Mammary epithelial cell (primary cell): ENCODE measurements at regions of chr7 and their contacts with region 1.

Region 1: GRCh38 chr7:23055582-23056178 is 41.8 kb upstream of the HYCC1 start:
- DNase-seq: peak; percentile 57
- H3K4me3 ChIP-seq: no peak overlapping the region
- H3K27ac ChIP-seq: no peak overlapping the region
- H3K4me1 ChIP-seq: peaks cover 2% of the 10 kb centered on the region
- H3K27me3 ChIP-seq: no peaks in the 10 kb centered on the region
- CTCF ChIP-seq: peak; percentile 94 to 95

Region 2: GRCh38 chr7:22854158-22855048 is 201.3 kb before region 1 on chr7:
- CTCF ChIA-PET with region 1: no interaction called
- dilution Hi-C with region 1: no loop called
- in situ Hi-C with region 1: loop called in 1 of 2 experiments (anchors 10 kb)
- intact Hi-C with region 1: loop called (anchors 1 kb)
- DNase-seq: peak; percentile 73
- H3K4me3 ChIP-seq: peak overlapping the region; percentile 64 to 77 (median 75)
- H3K27ac ChIP-seq: peak overlapping the region; percentile 99
- H3K4me1 ChIP-seq: peaks cover 39% of the 10 kb centered on the region
- H3K27me3 ChIP-seq: no peaks in the 10 kb centered on the region
- CTCF ChIP-seq: no peak

Region 3: DNA sequence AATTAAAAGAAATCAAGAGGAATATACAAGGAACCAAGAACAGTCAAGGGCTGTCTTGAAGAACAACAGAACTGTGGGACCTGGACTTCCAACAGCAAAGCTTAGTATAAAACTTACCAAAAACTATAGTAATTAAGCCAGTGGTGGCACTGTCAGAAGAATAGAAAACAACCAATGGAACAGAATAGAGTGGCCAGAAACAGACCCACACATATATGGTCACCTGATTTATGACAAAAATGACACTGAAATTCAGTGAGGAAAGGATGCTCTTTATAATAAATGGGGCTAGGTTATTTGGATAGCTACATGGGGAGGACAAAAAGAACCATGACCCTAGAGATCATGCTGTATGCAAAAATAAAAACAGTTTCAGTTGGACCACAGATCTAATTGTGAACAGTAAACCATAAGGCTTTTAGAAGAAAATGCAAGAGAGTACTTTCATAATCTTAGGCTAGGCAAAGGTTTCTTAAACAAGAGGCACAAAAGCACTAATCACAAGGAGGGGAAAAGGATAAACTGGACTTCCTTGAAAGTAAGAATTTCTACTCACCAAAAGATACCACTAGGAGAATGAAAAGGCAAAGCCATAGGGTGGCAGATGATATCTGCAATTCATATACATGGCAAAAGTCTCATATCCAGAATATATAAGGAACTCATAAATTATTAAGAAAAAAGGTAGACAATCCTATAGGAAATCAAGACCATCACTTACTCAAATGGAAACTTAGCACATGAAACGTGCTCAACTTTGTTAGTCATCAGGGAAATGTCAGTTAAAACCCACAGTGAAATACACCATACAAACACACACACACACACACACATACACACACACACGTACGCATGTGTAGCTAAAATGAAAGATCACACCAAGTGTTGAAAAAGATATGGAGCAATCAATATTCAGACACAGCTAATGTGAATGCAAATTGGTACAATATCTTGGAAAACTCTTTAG is 62.5 kb before region 1 on chr7:
- CTCF ChIA-PET with region 1: no interaction called
- dilution Hi-C with region 1: no loop called
- in situ Hi-C with region 1: no loop called
- intact Hi-C with region 1: no loop called
- DNase-seq: no peak
- H3K4me3 ChIP-seq: no peak overlapping the region
- H3K27ac ChIP-seq: no peak overlapping the region
- H3K4me1 ChIP-seq: peaks cover 13% of the 10 kb centered on the region
- H3K27me3 ChIP-seq: no peaks in the 10 kb centered on the region
- CTCF ChIP-seq: no peak